ENCODE measurements at regions of chr11 and their contacts with region 1.

Region 1: GRCh38 chr11:128172046-128172878 is 415.1 kb downstream of the ETS1 start:
- DNase-seq: peak; percentile 95
- ATAC-seq: peak; percentile 89
- H3K4me3 ChIP-seq: no peak overlapping the region
- H3K27ac ChIP-seq: no peak overlapping the region
- H3K4me1 ChIP-seq: peaks cover 20% of the 10 kb centered on the region
- H3K27me3 ChIP-seq: no peaks in the 10 kb centered on the region
- CTCF ChIP-seq: peak; percentile 96

Region 2: GRCh38 chr11:126340080-126340434 is 1832.2 kb before region 1 on chr11:
- CTCF ChIA-PET with region 1: no interaction called
- POLR2A ChIA-PET with region 1: interaction called, 18 read pairs
- intact Hi-C with region 1: no loop called
- DNase-seq: peak; percentile 89
- ATAC-seq: no peak
- H3K4me3 ChIP-seq: no peak overlapping the region
- H3K27ac ChIP-seq: peak overlapping the region; percentile 95
- H3K4me1 ChIP-seq: peaks cover 38% of the 10 kb centered on the region
- H3K27me3 ChIP-seq: no peaks in the 10 kb centered on the region
- CTCF ChIP-seq: no peak

Region 3: GRCh38 chr11:128290106-128290840 is 118.0 kb after region 1 on chr11:
- CTCF ChIA-PET with region 1: no interaction called
- POLR2A ChIA-PET with region 1: interaction called, 3 read pairs
- intact Hi-C with region 1: loop called (anchors 1 kb)
- DNase-seq: peak; percentile 94
- ATAC-seq: peak; percentile 82
- H3K4me3 ChIP-seq: no peak overlapping the region
- H3K27ac ChIP-seq: peak overlapping the region; percentile 53
- H3K4me1 ChIP-seq: peaks cover 39% of the 10 kb centered on the region
- H3K27me3 ChIP-seq: no peaks in the 10 kb centered on the region
- CTCF ChIP-seq: peak; percentile 97

Region 4: DNA sequence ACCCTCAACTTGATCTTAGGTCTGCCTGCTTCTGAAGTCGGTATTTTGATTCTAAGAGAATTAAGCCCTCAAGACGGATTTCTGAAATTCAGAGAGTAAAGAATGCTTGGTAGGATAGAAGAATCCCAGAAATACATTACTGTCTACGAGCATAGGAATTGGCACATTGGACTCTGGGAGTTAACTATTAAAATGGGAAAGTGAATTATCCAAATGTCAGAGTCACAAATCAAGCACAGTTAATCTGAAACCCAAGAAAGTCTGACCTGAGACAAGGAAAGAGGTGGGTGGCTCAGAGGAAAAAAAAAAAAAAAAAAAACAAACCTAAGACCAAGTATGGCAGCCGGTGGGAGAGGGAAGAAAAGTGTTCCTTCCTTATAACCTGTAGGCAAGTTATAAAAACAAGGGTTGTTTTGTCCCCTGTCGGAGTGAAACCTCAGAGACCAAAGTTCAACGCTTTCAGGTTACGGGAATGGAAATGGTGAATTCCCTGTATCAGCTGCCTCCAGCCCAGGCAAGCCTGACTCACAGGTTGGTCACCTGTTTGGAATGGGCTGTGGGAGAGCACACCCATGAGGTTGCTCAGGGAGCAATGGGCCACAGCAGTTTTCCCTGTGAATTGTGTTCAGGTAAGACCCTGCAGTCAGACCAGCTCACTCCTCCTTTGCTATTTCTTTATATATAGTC is 276.1 kb after region 1 on chr11:
- CTCF ChIA-PET with region 1: interaction called, 6 read pairs
- POLR2A ChIA-PET with region 1: no interaction called
- intact Hi-C with region 1: loop called (anchors 1 kb)
- DNase-seq: peak; percentile 100
- ATAC-seq: peak; percentile 97
- H3K4me3 ChIP-seq: peak overlapping the region; percentile 43; the same call in 1 of the 2 replicates
- H3K27ac ChIP-seq: peak overlapping the region; percentile 91
- H3K4me1 ChIP-seq: peaks cover 31% of the 10 kb centered on the region
- H3K27me3 ChIP-seq: no peaks in the 10 kb centered on the region
- CTCF ChIP-seq: peak; percentile 65

Region 5: DNA sequence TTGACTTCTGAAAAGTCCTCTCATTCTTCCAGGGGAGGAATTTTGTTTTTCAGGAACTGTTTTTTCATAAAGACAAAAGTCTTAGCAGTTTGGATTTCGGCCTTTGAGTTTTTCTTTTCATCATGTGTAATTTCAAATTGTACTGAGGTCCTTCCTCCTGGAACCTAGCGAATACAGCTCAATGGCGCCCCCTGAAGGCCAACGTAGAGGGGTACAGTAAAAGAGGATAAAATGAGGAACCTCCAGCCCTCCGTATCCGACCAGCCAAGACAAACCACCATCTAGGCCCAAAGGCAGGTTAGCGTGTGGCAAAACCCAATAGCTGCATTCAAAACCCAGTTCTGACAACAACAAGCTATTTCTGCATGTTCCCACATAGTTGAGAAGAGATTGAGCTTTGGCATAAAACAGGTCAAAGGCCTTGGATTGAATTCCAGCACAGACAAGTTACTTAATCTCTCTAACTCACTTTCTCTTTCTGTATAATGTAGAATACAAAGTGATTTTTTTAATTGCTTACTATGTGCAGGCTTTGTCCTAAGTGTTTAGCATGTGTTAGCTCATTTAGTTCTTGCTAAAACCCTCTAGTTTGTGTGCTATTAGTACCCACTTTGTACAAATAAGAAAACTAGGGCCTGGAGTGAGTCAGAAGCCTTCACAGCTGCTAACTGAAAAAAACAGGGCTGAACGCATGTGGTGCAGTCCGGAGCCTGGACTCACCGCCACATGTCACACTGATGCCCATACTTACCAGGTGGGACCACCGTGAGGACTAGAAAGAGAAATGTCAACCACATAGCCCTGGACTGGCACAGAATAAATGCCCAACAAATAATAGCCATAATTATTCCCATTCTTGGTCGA is 458.3 kb after region 1 on chr11:
- CTCF ChIA-PET with region 1: interaction called, 25 read pairs
- POLR2A ChIA-PET with region 1: no interaction called
- intact Hi-C with region 1: loop called (anchors 1 kb)
- DNase-seq: peak; percentile 92
- ATAC-seq: peak; percentile 94
- H3K4me3 ChIP-seq: no peak overlapping the region; the same call in 1 of the 2 replicates
- H3K27ac ChIP-seq: no peak overlapping the region
- H3K4me1 ChIP-seq: peaks cover 17% of the 10 kb centered on the region
- H3K27me3 ChIP-seq: no peaks in the 10 kb centered on the region
- CTCF ChIP-seq: peak; percentile 98

Region 6: DNA sequence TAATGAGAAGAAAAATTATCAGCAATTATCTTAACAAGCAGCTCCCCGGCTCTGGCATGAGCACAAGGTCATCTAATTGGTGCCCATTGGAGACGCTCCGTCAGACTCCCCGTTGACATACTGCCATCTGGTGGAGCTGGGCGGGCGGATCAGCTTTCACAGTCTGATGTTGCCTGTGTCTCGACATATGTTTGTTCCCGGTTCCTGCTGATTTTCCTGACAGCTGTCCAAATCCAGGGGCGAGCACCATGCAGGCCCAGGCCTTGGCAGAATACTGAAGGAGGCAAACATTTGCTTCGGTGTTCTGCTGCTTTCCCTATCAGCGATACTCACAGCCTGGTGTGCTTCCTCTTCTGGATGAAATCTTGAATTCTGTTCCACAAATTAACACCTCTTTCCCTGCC is 1159.6 kb after region 1 on chr11:
- CTCF ChIA-PET with region 1: no interaction called
- POLR2A ChIA-PET with region 1: no interaction called
- intact Hi-C with region 1: no loop called
- DNase-seq: peak; percentile 95
- ATAC-seq: peak; percentile 97
- H3K4me3 ChIP-seq: no peak overlapping the region
- H3K27ac ChIP-seq: no peak overlapping the region
- H3K4me1 ChIP-seq: peaks cover 11% of the 10 kb centered on the region; the same call in 1 of the 2 replicates
- H3K27me3 ChIP-seq: no peaks in the 10 kb centered on the region
- CTCF ChIP-seq: peak; percentile 97